ENCODE measurements at regions of chr17 and their contacts with region 1.

Region 1: DNA sequence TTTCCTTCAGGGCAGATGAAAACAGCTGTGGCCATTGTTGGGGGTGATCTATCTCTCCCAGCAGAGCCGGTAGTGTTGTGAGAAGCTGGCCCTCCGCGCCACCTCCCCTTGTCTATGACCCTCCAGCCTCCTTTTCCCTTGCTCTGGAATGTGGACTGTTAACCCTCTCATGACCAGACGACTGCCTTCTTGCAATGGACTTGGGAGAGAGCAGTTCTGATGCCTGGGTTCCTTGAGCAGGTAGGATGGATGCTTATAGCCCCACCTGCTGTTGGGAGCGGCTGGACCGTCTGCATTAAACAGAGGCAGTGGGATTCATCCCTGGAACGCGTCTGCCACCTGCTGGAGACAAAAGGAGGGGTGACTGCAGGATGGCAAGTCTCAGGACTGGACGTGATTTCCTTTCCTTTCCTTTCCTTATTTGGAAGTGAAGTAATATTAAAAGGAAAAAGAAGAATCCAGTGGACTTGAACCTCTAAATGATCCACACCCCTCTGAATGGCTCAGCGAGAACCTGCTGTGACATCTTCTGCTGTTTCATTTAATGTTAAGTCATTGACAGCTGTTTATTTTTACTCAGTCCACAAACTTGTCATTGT is 1.8 kb upstream of the SOST start:
- DNase-seq: peak; percentile 97
- H3K4me3 ChIP-seq: no peak overlapping the region
- H3K27ac ChIP-seq: peak overlapping the region in 1 of 4 donors; percentile 24
- H3K4me1 ChIP-seq: peaks cover 4 to 22% (median 15%) of the 10 kb centered on the region in 4 donors
- H3K27me3 ChIP-seq: peaks cover 0 to 37% (median 6%) of the 10 kb centered on the region in 4 donors
- CTCF ChIP-seq: peak in 2 of 3 experiments; percentile 97 to 100
- EP300 ChIP-seq: no peak
- POLR2A ChIP-seq: no peak

Region 2: DNA sequence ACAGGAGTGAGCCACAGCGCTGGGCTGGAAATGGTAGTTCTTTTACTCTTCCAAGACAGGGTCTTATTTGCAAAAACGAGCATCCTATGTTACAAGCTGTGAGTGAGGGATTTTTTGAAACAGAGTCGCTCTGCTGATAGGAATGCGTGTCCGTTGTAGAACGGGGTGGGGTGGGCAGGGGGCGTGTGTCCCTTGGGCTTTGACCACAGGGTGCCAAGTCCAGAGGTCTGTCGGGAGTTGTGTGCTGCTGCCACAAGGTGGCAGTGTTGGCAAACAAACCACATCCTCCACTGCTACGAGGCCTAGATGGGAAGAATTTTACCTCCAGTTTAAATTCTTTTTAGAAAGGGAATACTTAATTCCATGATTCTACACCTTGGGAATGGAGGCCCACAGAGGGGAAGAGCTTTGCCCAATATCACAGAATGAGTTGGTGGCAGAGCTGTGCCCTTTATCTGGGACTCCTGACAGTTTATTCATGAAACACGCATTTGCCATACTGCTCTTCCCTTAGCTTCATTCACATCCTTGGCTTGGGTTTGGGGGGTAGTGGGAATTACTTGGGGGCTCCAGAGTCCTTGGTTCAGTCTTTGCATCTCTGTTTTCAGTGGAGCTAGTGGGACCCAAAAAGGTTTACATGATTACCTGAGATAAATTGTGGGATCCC is 183.7 kb before region 1 on chr17:
- intact Hi-C with region 1: loop called (anchors 5 kb)
- DNase-seq: no peak
- H3K4me3 ChIP-seq: no peak overlapping the region
- H3K27ac ChIP-seq: no peak overlapping the region
- H3K4me1 ChIP-seq: peaks cover 23 to 35% (median 26%) of the 10 kb centered on the region in 4 donors
- H3K27me3 ChIP-seq: no peaks in the 10 kb centered on the region
- CTCF ChIP-seq: peak; percentile 90 to 96 (median 92)
- EP300 ChIP-seq: no peak
- POLR2A ChIP-seq: no peak

Region 3: DNA sequence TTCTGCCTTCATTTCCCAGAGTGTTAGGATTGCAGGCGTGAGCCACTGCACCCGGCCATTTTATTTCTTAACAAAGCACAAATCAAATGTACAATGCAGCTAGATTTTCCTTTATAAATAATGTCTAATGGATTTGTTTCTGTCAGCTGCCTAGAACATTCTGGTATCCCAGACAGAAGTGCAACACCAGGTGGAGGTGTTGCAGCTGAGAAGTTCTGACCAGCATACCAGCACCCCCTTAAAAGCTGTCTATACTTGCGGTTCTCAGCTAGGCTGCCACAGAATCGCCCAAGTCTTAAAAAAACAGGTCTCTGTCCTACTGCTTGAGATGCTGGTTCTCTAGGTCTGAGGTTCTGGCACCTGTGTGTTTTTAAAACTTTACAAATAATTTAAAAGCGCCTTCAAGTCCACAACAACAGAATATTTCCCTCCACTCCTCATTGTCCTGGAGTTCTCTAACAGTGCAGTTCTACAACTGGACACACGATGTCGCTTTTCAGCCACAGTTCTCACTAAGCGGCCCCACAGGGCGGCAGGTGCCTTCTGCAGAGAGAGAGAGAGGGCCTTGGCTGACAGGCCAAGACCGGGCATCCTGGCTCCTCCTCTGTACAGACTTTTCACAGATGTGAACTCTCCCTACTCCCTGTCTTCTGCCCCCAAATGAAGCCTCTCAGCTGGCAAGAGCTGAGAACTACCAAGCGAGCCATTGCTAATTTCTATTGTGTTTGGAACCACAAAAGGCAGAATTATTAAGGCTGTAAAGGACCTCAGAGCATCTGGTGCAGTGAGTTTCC is 66.1 kb before region 1 on chr17:
- intact Hi-C with region 1: loop called (anchors 1 kb)
- DNase-seq: no peak
- H3K4me3 ChIP-seq: no peak overlapping the region
- H3K27ac ChIP-seq: no peak overlapping the region
- H3K4me1 ChIP-seq: peaks cover 13 to 15% (median 14%) of the 10 kb centered on the region in 4 donors
- H3K27me3 ChIP-seq: peaks cover 0 to 3% (median 0%) of the 10 kb centered on the region in 4 donors
- CTCF ChIP-seq: peak; percentile 94 to 98 (median 97)
- EP300 ChIP-seq: no peak
- POLR2A ChIP-seq: no peak